ENCODE measurements at regions of chr1 and their contacts with region 1.

Region 1: DNA sequence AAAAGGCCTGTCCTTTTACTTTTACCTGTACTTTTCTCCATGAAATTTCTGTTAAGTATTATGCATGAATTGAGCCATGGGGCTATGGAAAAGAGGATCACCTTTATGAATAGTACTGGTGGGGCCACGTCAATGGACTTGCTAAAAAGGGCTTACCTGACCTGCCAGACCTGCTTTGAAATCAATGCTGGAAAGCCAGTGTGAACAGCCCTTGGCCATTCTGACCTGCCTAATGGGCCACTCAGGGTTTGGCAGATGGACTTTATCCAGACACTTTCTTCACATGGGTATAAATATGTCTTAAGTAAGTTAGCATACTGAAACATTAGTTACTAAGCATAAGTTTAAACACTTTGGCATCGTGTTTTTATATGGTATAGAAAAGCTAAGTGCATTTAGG is 8.3 kb upstream of the GUK1 start:
- DNase-seq: no peak
- H3K4me3 Mint-ChIP-seq: no peak overlapping the region
- H3K27ac Mint-ChIP-seq: no peak overlapping the region
- H3K4me1 Mint-ChIP-seq: peaks cover 3% of the 10 kb centered on the region
- H3K27me3 Mint-ChIP-seq: peaks cover 10% of the 10 kb centered on the region

Region 2: GRCh38 chr1:227999056-227999930 is 132.5 kb before region 1 on chr1:
- CTCF ChIA-PET with region 1: no interaction called
- intact Hi-C with region 1: loop called (anchors 1 kb)
- DNase-seq: peak; percentile 86
- H3K4me3 Mint-ChIP-seq: no peak overlapping the region
- H3K27ac Mint-ChIP-seq: no peak overlapping the region
- H3K4me1 Mint-ChIP-seq: no peaks in the 10 kb centered on the region
- H3K27me3 Mint-ChIP-seq: peaks cover 26% of the 10 kb centered on the region

Region 3: DNA sequence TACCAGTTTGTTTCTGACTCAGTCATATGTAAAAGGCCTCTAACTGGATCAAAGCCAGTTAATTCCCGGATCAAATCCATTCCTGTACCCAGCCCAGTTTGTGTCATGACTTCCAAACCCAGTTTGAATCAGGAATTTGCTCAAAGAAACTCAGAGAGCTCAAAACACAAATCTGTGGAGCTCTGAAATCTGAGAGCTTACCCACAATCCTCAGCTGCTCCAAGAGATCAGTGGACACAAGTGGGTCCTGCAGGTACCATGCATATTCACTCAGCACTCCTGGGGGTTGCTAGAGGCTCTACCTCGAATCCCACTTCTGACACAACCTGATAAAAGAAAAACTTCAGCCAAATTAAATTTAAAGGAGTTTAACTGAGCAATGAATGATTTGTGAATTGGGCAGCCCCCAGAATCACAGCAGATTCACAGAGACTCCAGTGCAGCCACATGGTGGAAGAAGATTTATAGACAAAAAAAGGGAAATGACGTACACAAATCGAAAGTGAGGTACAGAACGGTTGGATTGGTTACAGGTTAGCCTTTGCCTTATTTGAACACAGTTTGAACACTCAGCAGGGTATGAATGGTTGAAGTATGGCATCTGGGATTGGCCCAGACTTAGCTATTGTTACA is 10.8 kb before region 1 on chr1:
- CTCF ChIA-PET with region 1: interaction called, 17 read pairs
- intact Hi-C with region 1: no loop called
- DNase-seq: no peak
- H3K4me3 Mint-ChIP-seq: peak overlapping the region; percentile 47
- H3K27ac Mint-ChIP-seq: peak overlapping the region; percentile 16
- H3K4me1 Mint-ChIP-seq: peaks cover 4% of the 10 kb centered on the region
- H3K27me3 Mint-ChIP-seq: no peaks in the 10 kb centered on the region

Region 4: GRCh38 chr1:228212966-228213844 is 81.4 kb after region 1 on chr1:
- CTCF ChIA-PET with region 1: no interaction called
- intact Hi-C with region 1: loop called (anchors 2 kb)
- DNase-seq: peak; percentile 92
- H3K4me3 Mint-ChIP-seq: peak overlapping the region; percentile 83
- H3K27ac Mint-ChIP-seq: peak overlapping the region; percentile 50
- H3K4me1 Mint-ChIP-seq: no peaks in the 10 kb centered on the region
- H3K27me3 Mint-ChIP-seq: no peaks in the 10 kb centered on the region

Region 5: GRCh38 chr1:228393248-228393699 is 261.5 kb after region 1 on chr1:
- CTCF ChIA-PET with region 1: no interaction called
- intact Hi-C with region 1: loop called (anchors 5 kb)
- DNase-seq: no peak
- H3K4me3 Mint-ChIP-seq: no peak overlapping the region
- H3K27ac Mint-ChIP-seq: no peak overlapping the region
- H3K4me1 Mint-ChIP-seq: no peaks in the 10 kb centered on the region
- H3K27me3 Mint-ChIP-seq: no peaks in the 10 kb centered on the region

Measured in activated naive CD4-positive, alpha-beta T cell treated with anti-CD3 and anti-CD28 coated beads for 36 hours (primary cell).